Cardiac septum (tissue), 1 donor: ENCODE measurements at regions of chr18 and their contacts with region 1.

Region 1: GRCh38 chr18:267688-268552 is at the start of gene THOC1:
- DNase-seq: peak; percentile 96
- total RNA-seq, gene THOC1: 13.5 TPM

Region 2: DNA sequence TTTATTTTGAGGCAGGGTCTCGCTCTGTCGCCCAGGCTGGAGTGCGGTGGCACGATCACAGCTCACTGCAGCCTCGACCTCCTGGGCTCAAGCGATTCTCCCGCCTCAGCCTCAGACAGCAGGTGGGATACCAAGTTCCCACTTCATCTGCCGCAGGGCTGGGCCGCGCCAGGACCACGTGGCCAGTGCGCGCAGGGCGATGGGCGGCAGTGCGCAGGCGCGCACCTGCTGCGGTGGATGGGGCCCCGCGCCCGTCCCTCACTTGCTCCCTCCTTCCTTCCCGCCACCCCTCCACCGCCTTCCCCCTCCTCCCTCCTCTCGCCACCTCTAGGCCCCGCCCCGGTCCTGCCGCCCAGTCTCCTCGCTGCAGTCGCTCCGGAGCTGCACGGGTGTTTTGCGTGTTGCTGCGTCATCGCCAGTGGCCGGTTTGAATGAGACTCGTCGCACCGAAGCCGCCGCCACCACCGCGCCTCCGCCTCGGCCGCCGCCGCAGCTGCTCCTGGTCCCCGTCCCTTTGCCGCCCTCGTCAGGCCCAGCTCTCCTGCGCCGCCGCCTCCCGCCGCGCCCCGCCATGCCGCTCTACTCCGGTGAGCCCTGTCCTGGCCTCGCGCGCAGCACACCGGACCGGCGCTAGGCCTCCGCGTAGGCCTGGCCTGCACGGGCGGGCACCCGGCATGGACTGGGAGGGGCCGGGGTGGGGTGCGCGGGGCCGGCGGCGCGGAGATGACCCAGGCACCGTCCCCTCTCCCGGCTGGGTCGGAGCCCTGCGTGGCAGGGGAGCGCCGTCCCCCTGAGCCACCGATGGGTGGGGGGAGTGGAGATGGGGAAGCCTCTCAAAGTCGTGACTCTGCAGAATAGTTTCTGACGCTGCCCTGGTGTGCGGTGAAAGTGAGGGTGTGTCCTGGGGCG is 109.5 kb before region 1 on chr18 and contains the start of gene USP14:
- intact Hi-C with region 1: loop called (anchors 5 kb)
- DNase-seq: peak; percentile 97
- total RNA-seq, gene USP14: 44.3 TPM

Region 3: GRCh38 chr18:245282-245847 is 22.6 kb before region 1 on chr18:
- intact Hi-C with region 1: no loop called
- DNase-seq: no peak

Region 4: DNA sequence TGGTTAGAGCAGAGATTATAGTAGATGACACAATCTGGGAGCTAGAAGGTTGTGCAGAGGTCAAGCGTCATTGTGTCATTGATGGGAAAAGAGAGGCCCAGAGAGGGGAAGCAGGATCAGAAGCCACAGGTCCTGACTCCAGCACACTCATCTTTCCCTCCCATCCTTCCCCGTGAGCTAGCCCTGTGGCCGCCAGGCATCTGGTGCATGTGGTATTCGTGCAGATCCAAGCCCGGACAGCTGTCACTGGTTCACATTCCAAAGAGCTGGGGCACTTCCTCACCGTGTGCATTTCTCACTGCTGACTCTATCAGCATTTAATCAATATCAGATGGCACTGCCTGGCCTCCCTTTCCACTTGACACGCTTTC is 94.0 kb after region 1 on chr18:
- intact Hi-C with region 1: no loop called
- DNase-seq: no peak

Region 5: DNA sequence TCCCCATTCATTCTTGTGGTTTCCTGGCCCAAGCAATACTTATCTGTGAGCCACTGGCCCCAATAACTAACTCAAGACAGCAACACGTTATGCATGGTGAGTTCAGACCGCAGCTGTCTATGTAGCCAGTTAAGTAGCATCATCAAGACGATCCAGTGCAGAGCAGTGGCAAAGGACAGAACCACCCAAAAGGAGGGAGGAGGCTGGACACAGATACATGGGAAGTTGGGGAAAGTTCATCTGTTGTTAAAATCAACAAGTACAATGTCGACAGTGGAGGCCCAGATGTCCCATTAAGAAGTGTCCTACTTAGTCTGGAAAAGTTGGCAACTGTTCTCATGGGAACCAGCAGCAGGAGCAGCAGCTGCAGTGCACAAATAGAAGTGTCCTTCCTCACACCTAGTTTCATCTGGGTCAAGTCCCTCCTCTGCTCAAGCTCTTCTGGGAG is 106.8 kb after region 1 on chr18:
- intact Hi-C with region 1: no loop called
- DNase-seq: no peak

Region 6: DNA sequence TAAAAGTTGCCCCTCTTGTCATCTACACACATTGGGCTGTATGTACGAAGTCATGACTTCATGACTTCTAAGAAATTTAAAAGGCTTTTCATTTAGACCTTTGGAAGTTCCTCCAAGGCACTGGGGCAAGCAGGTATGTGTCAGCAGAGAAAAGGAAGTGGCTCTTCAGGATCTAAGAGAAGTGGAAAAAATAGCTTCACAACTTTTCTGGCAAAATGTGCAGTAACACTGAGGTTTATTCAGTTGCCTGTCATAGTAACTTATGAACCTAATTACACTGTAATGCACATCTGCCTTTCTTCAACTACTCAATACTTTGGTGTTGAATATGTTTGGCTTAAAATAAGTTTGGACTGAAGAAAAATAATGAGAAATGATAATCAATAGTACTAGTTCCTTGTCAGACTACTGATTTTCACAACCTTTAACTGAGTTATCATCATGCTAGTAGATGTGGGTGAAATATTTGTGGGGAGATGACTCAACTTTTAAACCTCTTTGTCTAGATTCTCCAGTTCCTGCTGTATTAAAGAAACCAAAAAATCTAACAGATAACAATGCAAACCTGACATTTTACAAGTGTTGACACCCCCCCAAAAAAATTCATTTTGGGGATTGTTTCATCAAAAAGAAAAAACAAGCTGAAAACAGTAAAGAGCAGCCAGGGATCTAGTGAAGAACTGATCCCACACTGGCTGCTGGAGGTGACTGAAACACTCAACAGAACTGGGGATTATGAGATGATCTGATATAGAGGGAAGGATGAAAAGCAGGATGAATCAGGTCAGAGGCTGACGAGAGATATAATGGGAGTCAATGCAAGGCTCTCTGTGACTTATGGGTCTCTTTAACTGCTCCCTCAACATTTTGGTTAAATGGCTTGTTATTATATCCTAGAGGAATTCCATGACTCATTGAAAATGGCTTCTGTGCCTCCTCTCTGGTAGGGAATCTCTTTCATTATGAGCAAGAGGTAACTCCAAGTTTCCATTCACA is 148.0 kb after region 1 on chr18:
- intact Hi-C with region 1: no loop called
- DNase-seq: no peak